Endothelial cell of umbilical vein (primary cell): ENCODE measurements at regions of chr6 and their contacts with region 1.

Region 1: GRCh38 chr6:3913077-3913957 is 64.1 kb downstream of the FAM50B start:
- DNase-seq: peak; percentile 99
- H3K4me3 ChIP-seq: peak overlapping the region in 1 of 3 experiments; percentile 10
- H3K27ac ChIP-seq: peak overlapping the region; percentile 98
- H3K4me1 ChIP-seq: peaks cover 72% of the 10 kb centered on the region
- H3K27me3 ChIP-seq: no peaks in the 10 kb centered on the region
- CTCF ChIP-seq: no peak
- POLR2A ChIP-seq: peak; percentile 52

Region 2: GRCh38 chr6:3751730-3752542 is 161.4 kb before region 1 on chr6:
- CTCF ChIA-PET with region 1: interaction called, 20 read pairs
- POLR2A ChIA-PET with region 1: interaction called, 11 read pairs
- dilution Hi-C with region 1: no loop called
- intact Hi-C with region 1: loop called (anchors 1 kb)
- DNase-seq: peak; percentile 95
- H3K4me3 ChIP-seq: peak overlapping the region; percentile 85 to 96 (median 89)
- H3K27ac ChIP-seq: peak overlapping the region; percentile 99
- H3K4me1 ChIP-seq: peaks cover 42% of the 10 kb centered on the region
- H3K27me3 ChIP-seq: no peaks in the 10 kb centered on the region
- CTCF ChIP-seq: peak; percentile 24 to 60
- POLR2A ChIP-seq: no peak

Region 3: DNA sequence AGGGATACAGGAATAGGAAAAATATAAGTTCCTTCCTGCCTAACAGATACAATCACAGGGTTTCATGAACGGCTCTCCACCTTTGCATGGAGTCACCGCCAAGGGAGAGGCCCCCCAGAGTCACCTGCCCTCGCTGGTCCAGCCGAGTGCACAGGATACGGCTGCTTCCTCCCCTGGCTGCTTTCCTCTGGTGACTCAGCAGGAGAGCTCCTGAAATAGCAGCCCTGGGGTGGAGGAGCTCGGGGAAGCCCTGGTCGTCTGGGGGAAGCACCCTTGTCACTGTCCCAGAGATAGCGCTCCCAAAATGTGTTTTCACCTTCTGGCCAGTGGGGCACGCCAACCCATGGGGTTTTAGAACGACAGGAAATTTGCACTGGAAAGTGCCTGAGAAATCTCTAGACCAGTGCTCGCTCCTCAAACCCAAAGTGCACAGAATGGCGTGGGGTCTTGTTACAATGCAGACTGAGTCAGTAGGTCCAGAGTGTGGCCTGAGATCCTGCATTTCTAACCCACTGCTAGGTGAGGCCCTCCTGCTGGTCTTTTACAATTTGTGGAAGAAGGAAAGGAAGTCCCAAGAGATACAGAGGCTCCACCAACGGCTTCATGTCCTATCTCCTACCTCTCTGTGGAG is 100.1 kb before region 1 on chr6:
- CTCF ChIA-PET with region 1: interaction called, 4 read pairs
- POLR2A ChIA-PET with region 1: no interaction called
- dilution Hi-C with region 1: no loop called
- intact Hi-C with region 1: loop called (anchors 1 kb)
- DNase-seq: peak; percentile 95
- H3K4me3 ChIP-seq: no peak overlapping the region
- H3K27ac ChIP-seq: peak overlapping the region; percentile 95
- H3K4me1 ChIP-seq: peaks cover 44% of the 10 kb centered on the region
- H3K27me3 ChIP-seq: no peaks in the 10 kb centered on the region
- CTCF ChIP-seq: no peak
- POLR2A ChIP-seq: peak; percentile 55

Region 4: GRCh38 chr6:3887150-3887700 is 26.1 kb before region 1 on chr6:
- CTCF ChIA-PET with region 1: interaction called, 15 read pairs
- POLR2A ChIA-PET with region 1: interaction called, 9 read pairs
- dilution Hi-C with region 1: no loop called
- intact Hi-C with region 1: loop called (anchors 1 kb)
- DNase-seq: peak; percentile 67
- H3K4me3 ChIP-seq: no peak overlapping the region
- H3K27ac ChIP-seq: no peak overlapping the region
- H3K4me1 ChIP-seq: peaks cover 19% of the 10 kb centered on the region
- H3K27me3 ChIP-seq: no peaks in the 10 kb centered on the region
- CTCF ChIP-seq: peak; percentile 45 to 62
- POLR2A ChIP-seq: no peak

Region 5: GRCh38 chr6:3990692-3991501 is 77.6 kb after region 1 on chr6:
- CTCF ChIA-PET with region 1: interaction called, 3 read pairs
- POLR2A ChIA-PET with region 1: no interaction called
- dilution Hi-C with region 1: no loop called
- intact Hi-C with region 1: loop called (anchors 1 kb)
- DNase-seq: peak; percentile 91
- H3K4me3 ChIP-seq: no peak overlapping the region
- H3K27ac ChIP-seq: no peak overlapping the region
- H3K4me1 ChIP-seq: peaks cover 17% of the 10 kb centered on the region
- H3K27me3 ChIP-seq: no peaks in the 10 kb centered on the region
- CTCF ChIP-seq: peak; percentile 92 to 94
- POLR2A ChIP-seq: no peak

Region 6: GRCh38 chr6:5446362-5447075 is 1533.2 kb after region 1 on chr6:
- CTCF ChIA-PET with region 1: no interaction called
- POLR2A ChIA-PET with region 1: no interaction called
- dilution Hi-C with region 1: no loop called
- intact Hi-C with region 1: no loop called
- DNase-seq: no peak
- H3K4me3 ChIP-seq: no peak overlapping the region
- H3K27ac ChIP-seq: no peak overlapping the region
- H3K4me1 ChIP-seq: no peaks in the 10 kb centered on the region
- H3K27me3 ChIP-seq: no peaks in the 10 kb centered on the region
- CTCF ChIP-seq: no peak
- POLR2A ChIP-seq: no peak